Activated CD4-positive, alpha-beta memory T cell treated with anti-CD3 and anti-CD28 coated beads for 36 hours (primary cell): ENCODE measurements at regions of chr12 and their contacts with region 1.

Region 1: DNA sequence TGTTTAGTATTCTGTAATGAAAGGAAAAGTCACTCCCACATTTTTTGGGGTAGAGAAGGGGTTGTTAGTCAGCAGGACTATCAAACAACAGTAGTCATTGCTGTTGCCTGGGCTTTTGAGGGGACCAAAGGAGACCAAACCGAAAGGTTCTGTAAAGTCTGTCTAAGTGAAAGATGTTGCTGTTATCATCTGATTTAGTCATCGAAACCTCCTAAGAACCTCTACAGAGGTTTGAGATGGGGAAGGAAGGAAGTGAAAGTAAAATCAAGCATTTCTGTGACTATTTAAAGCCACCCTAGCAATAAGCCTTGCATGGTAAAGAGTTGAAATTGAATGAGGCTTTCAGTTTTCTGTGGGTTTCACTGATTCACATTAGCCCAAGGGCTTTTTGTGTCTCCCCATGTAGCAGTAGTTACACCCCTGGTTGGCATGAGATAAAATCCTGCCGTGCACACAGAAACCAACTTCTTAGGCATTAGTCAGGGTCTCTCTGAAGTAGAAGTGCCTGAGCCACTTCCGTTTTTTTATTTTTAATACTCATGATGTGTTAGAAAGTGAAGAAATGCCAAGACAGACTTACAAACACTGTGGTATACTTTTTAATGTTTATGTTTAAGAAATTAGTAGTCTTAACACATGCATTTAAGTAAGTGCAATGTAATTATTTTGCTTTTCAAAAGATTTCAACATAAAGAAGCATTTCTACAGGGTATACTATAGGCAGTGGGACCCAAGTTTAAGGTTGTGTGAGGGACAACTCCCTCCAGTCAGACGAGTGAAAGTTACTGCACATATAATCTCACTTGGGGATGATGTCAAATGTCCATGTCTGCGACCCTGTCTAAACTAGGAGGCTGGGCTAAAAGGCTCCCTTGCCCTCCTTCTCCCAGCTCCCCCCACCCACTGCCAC is 50.4 kb downstream of the DYRK2 start:
- DNase-seq: peak; percentile 77
- H3K4me3 Mint-ChIP-seq: peak overlapping the region; percentile 13
- H3K27ac Mint-ChIP-seq: peak overlapping the region; percentile 46
- H3K4me1 Mint-ChIP-seq: peaks cover 49% of the 10 kb centered on the region
- H3K27me3 Mint-ChIP-seq: peaks cover 8% of the 10 kb centered on the region

Region 2: DNA sequence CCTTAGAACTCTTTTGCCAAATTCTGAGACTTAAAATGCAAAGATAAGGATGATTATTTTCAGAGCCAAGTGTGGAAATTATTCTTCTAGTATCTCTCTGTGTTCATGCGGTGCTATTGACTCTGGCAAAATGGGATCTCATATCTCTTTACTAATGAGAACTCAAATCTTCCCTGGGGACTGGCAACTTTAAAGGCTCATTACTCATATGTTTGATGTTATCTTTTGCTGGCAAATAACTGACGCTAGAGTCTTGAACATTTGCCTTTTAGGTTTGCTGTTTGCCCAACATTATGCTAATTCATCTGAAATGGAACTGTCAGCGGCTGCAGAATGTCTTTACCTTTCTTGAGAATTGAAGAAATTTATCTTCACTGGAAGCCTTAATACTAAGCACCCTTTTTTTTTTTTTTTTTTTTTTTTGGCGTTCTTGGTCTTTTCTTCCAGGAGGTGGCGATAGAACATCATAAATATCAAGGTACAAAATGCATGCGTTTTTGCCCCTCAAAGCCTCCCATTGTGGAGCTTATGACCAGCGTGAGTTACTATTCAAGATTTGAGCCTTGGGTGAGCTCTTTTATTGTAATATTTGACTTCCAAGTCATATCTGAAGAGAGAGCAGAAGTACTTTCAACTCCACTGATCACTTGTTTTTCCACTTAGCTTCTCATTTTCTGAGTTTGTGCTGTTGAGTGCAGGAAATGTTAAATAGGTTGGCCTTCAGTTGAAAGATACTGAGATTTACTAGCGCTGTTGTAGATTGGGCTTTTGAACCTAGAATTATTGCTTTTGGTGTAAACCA is 343.1 kb before region 1 on chr12:
- CTCF ChIA-PET with region 1: no interaction called
- POLR2A ChIA-PET with region 1: no interaction called
- intact Hi-C with region 1: loop called (anchors 10 kb)
- DNase-seq: peak; percentile 11
- H3K4me3 Mint-ChIP-seq: no peak overlapping the region
- H3K27ac Mint-ChIP-seq: no peak overlapping the region
- H3K4me1 Mint-ChIP-seq: peaks cover 35% of the 10 kb centered on the region
- H3K27me3 Mint-ChIP-seq: no peaks in the 10 kb centered on the region

Region 3: GRCh38 chr12:67482751-67483671 is 215.9 kb before region 1 on chr12:
- CTCF ChIA-PET with region 1: no interaction called
- POLR2A ChIA-PET with region 1: no interaction called
- intact Hi-C with region 1: loop called (anchors 2 kb)
- DNase-seq: peak; percentile 86
- H3K4me3 Mint-ChIP-seq: no peak overlapping the region
- H3K27ac Mint-ChIP-seq: peak overlapping the region; percentile 5
- H3K4me1 Mint-ChIP-seq: peaks cover 41% of the 10 kb centered on the region
- H3K27me3 Mint-ChIP-seq: no peaks in the 10 kb centered on the region

Region 4: GRCh38 chr12:67630373-67631088 is 68.4 kb before region 1 on chr12:
- CTCF ChIA-PET with region 1: no interaction called
- POLR2A ChIA-PET with region 1: no interaction called
- intact Hi-C with region 1: loop called (anchors 1 kb)
- DNase-seq: peak; percentile 92
- H3K4me3 Mint-ChIP-seq: peak overlapping the region; percentile 58
- H3K27ac Mint-ChIP-seq: peak overlapping the region; percentile 81
- H3K4me1 Mint-ChIP-seq: peaks cover 68% of the 10 kb centered on the region
- H3K27me3 Mint-ChIP-seq: peaks cover 2% of the 10 kb centered on the region

Region 5: GRCh38 chr12:67758119-67758518 is 59.2 kb after region 1 on chr12:
- CTCF ChIA-PET with region 1: no interaction called
- POLR2A ChIA-PET with region 1: no interaction called
- intact Hi-C with region 1: loop called (anchors 2 kb)
- DNase-seq: no peak
- H3K4me3 Mint-ChIP-seq: no peak overlapping the region
- H3K27ac Mint-ChIP-seq: no peak overlapping the region
- H3K4me1 Mint-ChIP-seq: peaks cover 39% of the 10 kb centered on the region
- H3K27me3 Mint-ChIP-seq: no peaks in the 10 kb centered on the region

Region 6: GRCh38 chr12:67827820-67828383 is 129.0 kb after region 1 on chr12:
- CTCF ChIA-PET with region 1: no interaction called
- POLR2A ChIA-PET with region 1: no interaction called
- intact Hi-C with region 1: loop called (anchors 1 kb)
- DNase-seq: peak; percentile 82
- H3K4me3 Mint-ChIP-seq: peak overlapping the region; percentile 70
- H3K27ac Mint-ChIP-seq: peak overlapping the region; percentile 84
- H3K4me1 Mint-ChIP-seq: peaks cover 24% of the 10 kb centered on the region
- H3K27me3 Mint-ChIP-seq: no peaks in the 10 kb centered on the region

Region 7: DNA sequence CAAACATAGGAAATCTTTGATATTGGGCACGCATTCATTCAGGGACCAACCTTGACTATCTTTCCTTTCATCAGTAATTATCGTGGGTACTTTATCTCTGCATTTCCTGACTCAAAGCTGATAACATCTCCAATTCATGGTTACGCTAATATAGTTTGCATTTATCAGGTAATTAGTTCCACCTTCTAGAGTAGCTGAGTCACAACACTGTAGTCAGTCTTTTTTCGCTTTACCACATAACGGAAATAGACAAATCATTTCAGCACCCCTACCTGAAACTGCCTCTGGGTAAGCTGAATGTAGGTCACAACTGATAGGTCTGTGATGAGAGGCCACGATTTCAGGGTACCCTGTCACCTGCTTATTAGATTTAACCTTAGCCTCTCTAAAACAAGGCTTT is 591.2 kb after region 1 on chr12:
- CTCF ChIA-PET with region 1: no interaction called
- POLR2A ChIA-PET with region 1: no interaction called
- intact Hi-C with region 1: loop called (anchors 10 kb)
- DNase-seq: peak; percentile 58
- H3K4me3 Mint-ChIP-seq: no peak overlapping the region
- H3K27ac Mint-ChIP-seq: peak overlapping the region; percentile 59
- H3K4me1 Mint-ChIP-seq: peaks cover 47% of the 10 kb centered on the region
- H3K27me3 Mint-ChIP-seq: peaks cover 23% of the 10 kb centered on the region